GM12878 (cell line): ENCODE measurements at regions of chr2 and their contacts with region 1.

Region 1: GRCh38 chr2:120312861-120313694 is 32.9 kb upstream of the INHBB start:
- DNase-seq: peak; percentile 23
- ATAC-seq: peak; percentile 72
- H3K4me3 ChIP-seq: peak overlapping the region; percentile 47; the same call in 1 of the 2 replicates
- H3K27ac ChIP-seq: no peak overlapping the region
- H3K4me1 ChIP-seq: peaks cover 24% of the 10 kb centered on the region
- H3K27me3 ChIP-seq: 0 out of 4 replicates have a peak, but pooled peaks cover 0 to 1% of the 10 kb centered on the region in 2 experiments
- CTCF ChIP-seq: peak; percentile 93 to 97 (median 96)
- EP300 ChIP-seq: no peak
- POLR2A ChIP-seq: no peak
- RAD21 ChIP-seq: peak; percentile 95

Region 2: DNA sequence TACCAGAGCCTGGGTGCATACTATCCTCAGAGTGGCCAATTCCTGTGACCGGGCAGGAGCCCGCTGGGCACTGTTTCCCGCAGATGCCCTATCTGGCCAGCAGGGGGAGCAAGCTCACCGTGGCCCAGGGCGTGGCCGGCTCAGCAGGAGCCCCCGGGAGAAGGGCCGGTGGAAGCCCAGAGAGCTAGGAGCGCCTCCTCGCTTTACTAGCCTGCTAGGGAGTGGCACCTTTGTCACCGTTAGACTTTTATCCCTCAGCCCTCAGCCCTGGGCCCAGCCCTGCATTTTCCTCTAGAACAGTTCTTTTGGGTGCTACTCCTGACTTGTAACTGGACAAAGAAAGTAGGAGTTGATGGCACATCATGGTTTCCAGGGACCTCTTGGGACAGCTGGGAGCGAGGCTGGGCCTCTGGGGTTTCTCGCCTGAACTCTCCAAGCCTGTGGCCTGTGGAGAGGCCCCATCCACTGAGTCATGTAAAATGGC is 610.1 kb before region 1 on chr2:
- CTCF ChIA-PET with region 1: interaction called, 3 read pairs
- POLR2A ChIA-PET with region 1: no interaction called
- RAD21 ChIA-PET with region 1: interaction called, 6 read pairs
- SMC1A ChIA-PET with region 1: interaction called, 10 read pairs
- in situ Hi-C with region 1: no loop called
- intact Hi-C with region 1: no loop called
- DNase-seq: no peak
- ATAC-seq: peak; percentile 97
- H3K4me3 ChIP-seq: no peak overlapping the region
- H3K27ac ChIP-seq: no peak overlapping the region
- H3K4me1 ChIP-seq: peaks cover 14% of the 10 kb centered on the region
- H3K27me3 ChIP-seq: no peaks in the 10 kb centered on the region; a peak in 1 of 4 replicates
- CTCF ChIP-seq: peak; percentile 96 to 99 (median 98)
- EP300 ChIP-seq: no peak
- POLR2A ChIP-seq: no peak
- RAD21 ChIP-seq: peak; percentile 88

Region 3: GRCh38 chr2:120005834-120006521 is 307.1 kb before region 1 on chr2:
- CTCF ChIA-PET with region 1: no interaction called
- POLR2A ChIA-PET with region 1: no interaction called
- RAD21 ChIA-PET with region 1: no interaction called
- SMC1A ChIA-PET with region 1: no interaction called
- in situ Hi-C with region 1: no loop called
- intact Hi-C with region 1: loop called (anchors 5 kb)
- DNase-seq: peak; percentile 65
- ATAC-seq: peak; percentile 94
- H3K4me3 ChIP-seq: no peak overlapping the region
- H3K27ac ChIP-seq: peak overlapping the region; percentile 25; the same call in 1 of the 2 replicates
- H3K4me1 ChIP-seq: peaks cover 10% of the 10 kb centered on the region
- H3K27me3 ChIP-seq: no peaks in the 10 kb centered on the region
- CTCF ChIP-seq: no peak
- EP300 ChIP-seq: peak in 1 of 2 experiments; percentile 33; a peak in 1 of 4 replicates
- POLR2A ChIP-seq: no peak
- RAD21 ChIP-seq: no peak

Region 4: DNA sequence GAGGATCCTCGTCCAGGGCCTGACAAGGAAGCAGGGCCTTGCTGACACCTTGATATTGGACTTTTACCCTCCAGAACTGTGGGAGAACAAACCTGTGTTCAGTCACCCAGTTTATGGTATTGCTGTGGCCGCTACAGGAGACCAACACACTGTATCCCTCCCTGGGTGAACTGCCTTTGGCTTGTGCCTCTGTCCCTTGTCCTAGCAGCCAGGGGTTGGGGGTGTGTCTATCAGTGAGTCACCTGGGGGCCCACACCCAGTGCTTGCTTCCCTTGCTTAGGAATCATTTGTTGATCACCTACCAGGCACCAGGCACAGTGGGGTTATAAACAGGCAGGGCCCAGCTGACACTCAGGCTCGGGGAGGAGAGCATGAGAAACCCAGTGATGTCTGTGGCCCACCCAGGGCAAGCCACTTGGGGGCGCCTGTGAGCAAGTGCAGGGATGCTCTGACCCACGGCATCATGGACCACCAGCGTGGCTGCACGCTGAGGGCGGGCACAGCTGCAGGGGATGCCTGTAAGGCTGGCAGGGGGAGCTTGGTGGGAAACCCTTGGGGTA is 107.0 kb before region 1 on chr2:
- CTCF ChIA-PET with region 1: interaction called, 63 read pairs
- POLR2A ChIA-PET with region 1: interaction called, 3 read pairs
- RAD21 ChIA-PET with region 1: interaction called, 50 read pairs
- SMC1A ChIA-PET with region 1: interaction called, 29 read pairs
- in situ Hi-C with region 1: no loop called
- intact Hi-C with region 1: loop called (anchors 1 kb)
- DNase-seq: no peak
- ATAC-seq: peak; percentile 86
- H3K4me3 ChIP-seq: no peak overlapping the region
- H3K27ac ChIP-seq: no peak overlapping the region
- H3K4me1 ChIP-seq: peaks cover 11% of the 10 kb centered on the region
- H3K27me3 ChIP-seq: no peaks in the 10 kb centered on the region
- CTCF ChIP-seq: peak; percentile 52 to 64 (median 58)
- EP300 ChIP-seq: no peak
- POLR2A ChIP-seq: no peak
- RAD21 ChIP-seq: peak; percentile 55

Region 5: GRCh38 chr2:120231974-120232635 is 81.0 kb before region 1 on chr2:
- CTCF ChIA-PET with region 1: interaction called, 52 read pairs
- POLR2A ChIA-PET with region 1: interaction called, 3 read pairs
- RAD21 ChIA-PET with region 1: interaction called, 64 read pairs
- SMC1A ChIA-PET with region 1: interaction called, 106 read pairs
- in situ Hi-C with region 1: no loop called
- intact Hi-C with region 1: loop called (anchors 2 kb)
- DNase-seq: peak; percentile 86
- ATAC-seq: peak; percentile 85
- H3K4me3 ChIP-seq: peak overlapping the region; percentile 89
- H3K27ac ChIP-seq: peak overlapping the region; percentile 97
- H3K4me1 ChIP-seq: peaks cover 18% of the 10 kb centered on the region
- H3K27me3 ChIP-seq: no peaks in the 10 kb centered on the region
- CTCF ChIP-seq: no peak
- EP300 ChIP-seq: peak in 1 of 2 experiments; percentile 37; a peak in 2 of 4 replicates
- POLR2A ChIP-seq: peak; percentile 70
- RAD21 ChIP-seq: no peak

Region 6: GRCh38 chr2:120257522-120257921 is 55.6 kb before region 1 on chr2:
- CTCF ChIA-PET with region 1: interaction called, 33 read pairs
- POLR2A ChIA-PET with region 1: interaction called, 3 read pairs
- RAD21 ChIA-PET with region 1: interaction called, 53 read pairs
- SMC1A ChIA-PET with region 1: interaction called, 5 read pairs
- in situ Hi-C with region 1: no loop called
- intact Hi-C with region 1: loop called (anchors 2 kb)
- DNase-seq: no peak
- ATAC-seq: no peak
- H3K4me3 ChIP-seq: 0 out of 2 replicates have a peak overlapping the region, but pooled peaks have one; percentile 6
- H3K27ac ChIP-seq: no peak overlapping the region
- H3K4me1 ChIP-seq: peaks cover 16% of the 10 kb centered on the region
- H3K27me3 ChIP-seq: no peaks in the 10 kb centered on the region
- CTCF ChIP-seq: no peak
- EP300 ChIP-seq: no peak
- POLR2A ChIP-seq: no peak
- RAD21 ChIP-seq: no peak

Region 7: DNA sequence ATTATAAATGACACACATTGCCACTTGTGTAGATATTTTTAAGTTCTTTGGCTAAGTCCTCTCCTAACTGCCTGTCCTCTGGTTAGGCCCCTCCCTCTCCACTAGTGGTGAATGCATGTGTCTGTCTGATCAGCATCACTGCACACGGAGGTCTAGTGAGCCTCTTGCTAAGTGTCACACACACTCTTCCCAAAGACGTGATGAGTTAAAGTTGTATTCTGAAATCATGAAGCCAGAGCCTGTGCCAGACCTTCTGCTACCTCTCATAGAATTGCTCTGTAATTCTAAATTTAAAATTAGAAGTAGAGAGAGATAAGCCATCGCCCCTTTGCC is 19.1 kb before region 1 on chr2:
- CTCF ChIA-PET with region 1: interaction called, 12 read pairs
- POLR2A ChIA-PET with region 1: no interaction called
- RAD21 ChIA-PET with region 1: interaction called, 10 read pairs
- SMC1A ChIA-PET with region 1: interaction called, 7 read pairs
- in situ Hi-C with region 1: no loop called
- intact Hi-C with region 1: no loop called
- DNase-seq: peak; percentile 48
- ATAC-seq: peak; percentile 100
- H3K4me3 ChIP-seq: peak overlapping the region; percentile 22; the same call in 1 of the 2 replicates
- H3K27ac ChIP-seq: peak overlapping the region; percentile 64
- H3K4me1 ChIP-seq: peaks cover 14% of the 10 kb centered on the region
- H3K27me3 ChIP-seq: no peaks in the 10 kb centered on the region
- CTCF ChIP-seq: no peak
- EP300 ChIP-seq: no peak
- POLR2A ChIP-seq: no peak
- RAD21 ChIP-seq: no peak

Region 8: GRCh38 chr2:120419073-120419472 is 106.0 kb after region 1 on chr2:
- CTCF ChIA-PET with region 1: no interaction called
- POLR2A ChIA-PET with region 1: no interaction called
- RAD21 ChIA-PET with region 1: no interaction called
- SMC1A ChIA-PET with region 1: no interaction called
- in situ Hi-C with region 1: no loop called
- intact Hi-C with region 1: no loop called
- DNase-seq: no peak
- ATAC-seq: no peak
- H3K4me3 ChIP-seq: no peak overlapping the region
- H3K27ac ChIP-seq: no peak overlapping the region
- H3K4me1 ChIP-seq: no peaks in the 10 kb centered on the region
- H3K27me3 ChIP-seq: peaks cover 0 to 1% of the 10 kb centered on the region in 2 experiments; a peak in 2 of 4 replicates
- CTCF ChIP-seq: no peak
- EP300 ChIP-seq: no peak
- POLR2A ChIP-seq: no peak
- RAD21 ChIP-seq: no peak